ENCODE measurements at regions of chr1 and their contacts with region 1.

Region 1: DNA sequence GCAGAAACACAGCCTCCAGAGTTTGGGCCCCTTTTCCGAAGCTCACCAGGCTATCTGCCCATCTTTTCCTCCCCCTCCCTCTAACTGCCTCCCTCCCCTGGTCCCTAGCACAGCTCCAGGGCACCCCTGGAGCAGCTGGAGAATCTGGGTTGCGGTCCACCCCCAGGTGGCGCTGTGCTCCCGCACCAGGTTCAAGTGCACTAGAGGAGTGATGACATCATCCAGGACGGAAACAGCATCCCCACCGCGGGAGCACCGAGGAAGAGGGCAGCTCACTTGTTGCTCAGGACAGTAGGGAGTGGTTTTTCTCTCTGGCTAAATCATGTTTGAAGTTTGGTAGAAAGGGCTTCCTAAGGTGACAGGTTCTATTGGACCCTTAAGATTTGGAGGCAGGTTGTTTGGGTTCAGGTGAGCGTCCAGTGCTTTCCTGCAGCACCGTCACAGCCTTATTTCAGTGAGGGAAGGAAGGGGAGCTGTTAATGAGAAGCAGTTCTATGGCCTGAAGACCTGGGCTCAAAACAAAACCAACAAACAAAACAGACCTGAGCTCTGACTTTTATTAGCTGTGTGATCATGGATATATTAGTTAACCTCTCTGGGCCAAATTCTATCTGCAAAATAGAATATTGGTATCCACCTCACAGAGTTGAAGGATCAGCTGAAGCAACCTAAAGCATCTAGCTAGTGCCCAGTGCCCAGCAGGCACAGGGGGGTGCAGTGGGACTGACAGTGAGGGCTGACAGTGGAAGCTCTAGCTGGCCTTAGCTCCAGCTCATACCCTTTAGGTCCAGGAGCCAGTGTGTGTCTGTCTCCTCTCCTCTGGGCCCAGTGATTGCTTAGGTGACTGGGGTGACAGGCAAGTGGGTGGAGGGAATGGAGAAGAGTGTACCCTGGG is 7.5 kb downstream of the SHISA4 start:
- DNase-seq: peak; percentile 91 to 96 (median 95)
- ATAC-seq: peak; percentile 83 to 89
- H3K4me3 ChIP-seq: no peak overlapping the region
- H3K27ac ChIP-seq: peak overlapping the region; percentile 65
- H3K4me1 ChIP-seq: no peaks in the 10 kb centered on the region
- H3K27me3 ChIP-seq: no peaks in the 10 kb centered on the region

Region 2: DNA sequence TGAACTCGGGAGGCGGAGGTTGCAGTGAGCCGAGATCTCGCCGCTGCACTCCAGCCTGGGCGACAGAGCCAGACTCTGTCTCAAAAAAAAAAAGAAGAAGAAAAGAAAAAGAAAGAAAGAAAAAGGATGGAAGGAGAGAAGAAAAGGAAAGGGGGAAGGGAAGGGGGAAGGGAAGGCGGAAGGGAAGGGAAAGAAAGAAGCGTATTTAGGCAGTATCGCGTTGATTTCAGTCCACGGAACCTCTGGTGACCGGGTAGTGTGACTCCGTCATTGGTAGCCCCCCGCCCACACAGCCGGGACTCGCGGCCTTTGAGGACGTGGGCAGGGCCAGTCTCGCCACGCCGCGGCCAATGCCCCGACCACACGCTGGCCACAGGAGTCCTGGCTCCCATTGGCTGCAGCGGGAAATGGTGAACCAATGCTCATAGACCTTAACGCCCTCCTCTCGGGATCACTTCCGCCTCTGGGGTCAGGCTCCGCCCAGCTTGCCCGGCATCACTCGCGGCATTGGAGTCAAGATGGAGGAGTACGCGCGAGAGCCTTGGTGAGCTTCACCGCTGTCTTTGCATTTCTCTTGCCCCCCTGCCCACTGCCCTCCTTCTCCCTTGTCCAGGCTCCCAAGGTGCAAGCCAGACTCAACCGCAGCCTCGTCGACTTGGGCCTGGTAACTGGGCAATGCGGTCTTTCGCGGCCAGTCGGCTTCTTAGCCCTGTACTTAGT is 59.0 kb after region 1 on chr1 and contains the start of gene TIMM17A:
- intact Hi-C with region 1: loop called in 1 of 4 experiments (anchors 5 kb)
- DNase-seq: peak; percentile 98 to 99 (median 98)
- ATAC-seq: peak; percentile 100
- H3K4me3 ChIP-seq: peak within 1 kb of the TSS; percentile 71
- H3K27ac ChIP-seq: peak within 1 kb of the TSS; percentile 73
- H3K4me1 ChIP-seq: no peaks in the 10 kb centered on the region
- H3K27me3 ChIP-seq: no peaks in the 10 kb centered on the region
- total RNA-seq, gene TIMM17A: 67.8 to 96.9 (median 78.5) TPM

Region 3: DNA sequence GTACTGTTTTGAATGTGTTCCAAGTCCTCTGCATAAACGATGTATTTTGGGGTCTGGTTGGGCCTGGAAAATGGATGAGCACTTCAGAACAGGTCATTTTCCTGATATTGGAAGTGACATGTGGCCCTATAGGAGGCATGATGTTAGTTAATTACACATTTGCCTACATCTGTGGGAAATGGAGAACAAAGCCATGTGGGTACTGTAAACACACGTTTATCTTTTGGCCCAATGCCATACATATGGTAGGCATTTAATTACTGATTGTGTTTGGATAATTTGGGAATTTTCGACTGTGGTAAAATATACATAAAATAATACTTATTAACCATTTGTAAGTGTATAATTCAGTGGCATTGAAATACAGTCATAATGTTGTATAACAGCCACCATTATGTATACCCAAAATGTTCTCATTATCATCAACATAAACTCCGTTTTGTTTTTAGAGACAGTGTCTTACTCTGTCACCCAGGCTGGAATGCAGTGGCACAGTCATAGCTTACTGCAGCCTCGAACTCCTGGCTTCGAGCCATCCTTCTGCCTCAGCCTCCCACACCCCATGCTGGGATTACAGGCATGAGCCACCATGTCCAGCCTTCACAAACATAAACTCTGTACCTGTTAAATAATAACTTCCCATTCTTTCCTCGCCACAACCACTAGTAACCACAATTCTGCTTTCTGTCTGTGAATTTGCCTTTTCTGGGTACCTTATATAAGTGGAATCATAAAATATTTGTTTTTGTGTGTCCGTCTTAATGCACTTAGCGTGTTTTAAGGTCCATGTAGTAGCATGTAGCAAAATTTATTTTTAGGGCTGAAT is 74.4 kb after region 1 on chr1:
- intact Hi-C with region 1: loop called (anchors 2 to 5 kb)
- DNase-seq: peak in 1 of 3 donors; percentile 31
- ATAC-seq: no peak
- H3K4me3 ChIP-seq: no peak overlapping the region
- H3K27ac ChIP-seq: no peak overlapping the region
- H3K4me1 ChIP-seq: no peaks in the 10 kb centered on the region
- H3K27me3 ChIP-seq: no peaks in the 10 kb centered on the region

Region 4: DNA sequence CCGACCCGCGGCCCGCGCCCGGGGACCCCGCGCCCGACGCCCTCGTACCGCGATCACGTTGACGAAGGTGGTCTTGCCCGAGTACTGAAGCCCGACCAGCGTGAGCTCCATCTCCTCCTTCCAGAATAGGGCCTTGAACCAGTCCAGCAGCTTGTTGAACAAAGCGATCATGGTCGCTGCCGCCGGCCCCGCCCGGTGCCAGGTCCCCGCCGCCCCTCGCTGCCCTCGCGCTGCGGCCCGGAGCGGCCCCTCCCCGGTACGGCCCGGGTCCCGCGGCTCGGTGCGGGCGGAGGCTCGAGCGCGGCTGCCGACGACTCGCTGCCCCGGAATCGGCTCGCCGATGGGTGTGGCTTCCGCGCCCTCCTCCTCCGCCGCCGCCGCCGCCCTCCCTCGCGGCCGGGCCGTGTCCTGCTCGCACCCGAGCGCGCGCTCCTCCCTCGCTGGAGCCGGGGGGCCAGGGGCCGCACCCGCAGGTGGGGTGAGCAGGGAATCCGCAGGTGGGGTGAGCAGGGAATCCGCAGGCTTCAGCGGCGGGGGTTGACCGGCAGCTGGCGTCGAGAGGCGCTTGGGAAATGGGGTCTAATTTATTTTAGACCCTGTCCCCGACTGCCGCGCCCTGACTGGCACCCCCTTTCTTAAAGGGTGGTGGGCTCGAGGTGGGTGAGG is 248.4 kb after region 1 on chr1 and contains the start of gene ARL8A:
- intact Hi-C with region 1: no loop called
- DNase-seq: peak; percentile 81 to 93 (median 90)
- ATAC-seq: peak; percentile 74 to 78
- H3K4me3 ChIP-seq: peak within 1 kb of the TSS; percentile 90
- H3K27ac ChIP-seq: peak within 1 kb of the TSS; percentile 81
- H3K4me1 ChIP-seq: peaks cover 4% of the 10 kb centered on the region
- H3K27me3 ChIP-seq: no peaks in the 10 kb centered on the region
- total RNA-seq, gene ARL8A: 60.9 to 75.3 (median 66.7) TPM